GM12878 (cell line): ENCODE measurements at regions of chr2 and their contacts with region 1.

Region 1: DNA sequence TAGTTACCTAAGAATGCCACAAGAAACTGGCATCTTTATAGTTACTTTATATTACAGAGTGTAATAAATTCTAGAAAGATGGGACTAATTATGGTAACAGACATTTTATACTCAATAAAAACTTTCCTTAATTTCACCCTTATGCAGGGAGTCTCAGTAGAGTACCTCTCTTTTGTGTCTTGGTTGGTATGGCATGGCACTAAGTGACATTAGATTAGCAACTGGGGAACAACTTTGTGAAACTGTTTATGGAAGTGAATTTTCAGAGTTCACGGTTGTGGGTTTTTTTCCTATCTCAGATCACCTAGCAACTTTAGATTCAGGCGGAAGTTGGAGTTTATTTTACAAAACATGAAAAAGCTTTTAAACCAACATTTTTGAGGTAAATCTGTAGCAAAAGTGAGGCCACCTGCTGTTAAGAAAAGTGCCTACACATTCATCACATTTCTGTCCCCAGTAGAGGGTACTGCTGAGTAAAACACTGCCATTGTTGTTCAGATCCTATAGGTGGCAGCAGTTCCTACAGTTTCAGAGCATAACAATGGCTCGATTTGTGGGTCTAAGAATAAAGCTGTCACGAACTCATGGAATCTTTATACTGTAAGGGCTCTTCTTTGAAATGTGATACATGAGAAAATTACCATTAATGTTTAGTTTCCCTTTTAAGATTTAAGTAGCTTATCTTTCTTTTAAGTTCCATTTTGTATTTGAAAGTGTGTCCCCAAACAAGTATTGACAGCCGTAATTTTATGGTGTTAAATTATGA is 117.6 kb downstream of the CAMKMT start:
- DNase-seq: peak; percentile 61
- ATAC-seq: peak; percentile 100
- H3K4me3 ChIP-seq: no peak overlapping the region
- H3K27ac ChIP-seq: no peak overlapping the region
- H3K4me1 ChIP-seq: no peaks in the 10 kb centered on the region
- H3K27me3 ChIP-seq: no peaks in the 10 kb centered on the region
- CTCF ChIP-seq: peak; percentile 98 to 100 (median 100); a peak in 5 of 6 replicates
- EP300 ChIP-seq: no peak
- POLR2A ChIP-seq: no peak
- RAD21 ChIP-seq: peak; percentile 99

Region 2: DNA sequence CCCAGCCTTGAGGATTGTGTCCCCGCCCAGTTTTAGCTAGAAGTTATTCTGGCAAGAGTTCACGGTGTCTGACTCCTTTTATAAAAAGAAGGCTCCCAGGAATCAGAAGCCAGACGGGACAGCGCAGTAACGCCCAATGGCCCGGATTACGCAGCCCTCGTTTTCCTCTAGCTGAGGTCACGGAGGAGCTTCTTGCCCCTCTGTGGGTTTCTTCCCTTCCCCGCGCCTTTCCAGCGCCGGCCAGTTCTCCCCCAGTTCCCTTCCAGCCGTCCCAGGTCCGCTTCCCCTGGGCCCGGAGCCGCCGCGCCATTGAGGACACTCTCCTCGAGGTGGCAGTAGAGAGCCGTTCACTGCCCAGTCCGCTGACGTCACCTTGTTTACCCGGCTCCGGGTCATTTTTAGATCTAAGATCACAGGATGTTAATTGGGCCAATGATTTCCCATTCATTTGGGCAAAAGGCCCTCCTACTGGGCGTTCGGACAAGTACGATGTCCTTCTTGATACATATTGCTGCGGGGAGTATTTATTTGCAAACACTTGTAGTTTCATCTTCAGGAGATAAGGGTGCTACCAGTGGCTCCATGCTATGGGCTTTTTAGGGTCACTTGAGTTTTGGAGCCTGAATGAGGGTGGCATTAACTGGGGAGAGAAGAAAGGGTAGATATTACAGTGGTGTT is 392.1 kb before region 1 on chr2:
- CTCF ChIA-PET with region 1: interaction called, 10 read pairs
- POLR2A ChIA-PET with region 1: interaction called, 3 read pairs
- RAD21 ChIA-PET with region 1: interaction called, 5 read pairs
- SMC1A ChIA-PET with region 1: interaction called, 6 read pairs
- in situ Hi-C with region 1: no loop called
- intact Hi-C with region 1: loop called (anchors 1 kb)
- DNase-seq: no peak
- ATAC-seq: peak; percentile 79
- H3K4me3 ChIP-seq: peak overlapping the region; percentile 61; the same call in 1 of the 2 replicates
- H3K27ac ChIP-seq: no peak overlapping the region
- H3K4me1 ChIP-seq: peaks cover 13% of the 10 kb centered on the region
- H3K27me3 ChIP-seq: no peaks in the 10 kb centered on the region
- CTCF ChIP-seq: peak; percentile 93 to 97 (median 96); a peak in 5 of 6 replicates
- EP300 ChIP-seq: no peak
- POLR2A ChIP-seq: no peak
- RAD21 ChIP-seq: peak; percentile 95

Region 3: DNA sequence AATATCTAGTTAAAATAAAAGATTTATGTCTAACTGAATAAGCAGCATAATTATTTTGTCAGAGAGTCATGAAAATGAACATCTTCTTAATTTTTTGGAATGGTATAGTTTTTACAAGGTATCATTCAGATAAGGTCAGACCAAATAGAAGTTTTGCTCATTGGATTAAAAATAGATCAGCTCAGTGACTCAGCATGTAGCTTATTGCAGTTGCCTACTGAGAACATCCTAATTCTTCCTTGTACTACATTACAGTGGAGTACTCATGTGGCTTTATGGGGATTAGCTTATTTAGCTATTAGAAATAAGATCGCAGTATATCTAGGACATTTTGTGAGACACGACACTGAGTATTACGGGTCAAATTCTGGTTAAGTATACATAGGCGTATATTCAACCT is 348.9 kb before region 1 on chr2:
- CTCF ChIA-PET with region 1: no interaction called
- POLR2A ChIA-PET with region 1: no interaction called
- RAD21 ChIA-PET with region 1: no interaction called
- SMC1A ChIA-PET with region 1: no interaction called
- in situ Hi-C with region 1: no loop called
- intact Hi-C with region 1: no loop called
- DNase-seq: no peak
- ATAC-seq: no peak
- H3K4me3 ChIP-seq: no peak overlapping the region
- H3K27ac ChIP-seq: no peak overlapping the region
- H3K4me1 ChIP-seq: no peaks in the 10 kb centered on the region
- H3K27me3 ChIP-seq: no peaks in the 10 kb centered on the region
- CTCF ChIP-seq: no peak
- EP300 ChIP-seq: no peak
- POLR2A ChIP-seq: no peak
- RAD21 ChIP-seq: no peak

Region 4: DNA sequence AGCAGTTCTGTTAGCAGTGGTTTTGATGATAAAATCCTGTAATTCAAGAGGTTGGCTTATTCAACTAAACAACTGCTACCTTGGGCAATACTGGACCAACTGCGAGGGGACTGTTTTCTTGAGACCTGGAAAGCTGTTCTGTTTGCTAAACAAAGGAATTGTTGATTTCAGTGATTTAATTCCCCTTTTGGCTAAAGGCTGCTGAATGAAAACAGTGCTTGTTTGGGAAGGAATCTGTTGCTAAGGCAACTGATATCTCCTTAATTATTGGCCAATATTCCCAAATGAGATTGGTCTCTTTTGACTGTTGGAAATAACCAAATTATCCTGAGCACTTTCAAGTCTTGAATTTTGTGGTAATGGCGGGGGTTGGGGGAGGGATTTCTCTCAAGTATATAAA is 19.2 kb after region 1 on chr2:
- CTCF ChIA-PET with region 1: interaction called, 24 read pairs
- POLR2A ChIA-PET with region 1: no interaction called
- RAD21 ChIA-PET with region 1: no interaction called
- SMC1A ChIA-PET with region 1: interaction called, 19 read pairs
- in situ Hi-C with region 1: no loop called
- intact Hi-C with region 1: no loop called
- DNase-seq: no peak
- ATAC-seq: no peak
- H3K4me3 ChIP-seq: no peak overlapping the region
- H3K27ac ChIP-seq: no peak overlapping the region
- H3K4me1 ChIP-seq: no peaks in the 10 kb centered on the region
- H3K27me3 ChIP-seq: no peaks in the 10 kb centered on the region
- CTCF ChIP-seq: no peak
- EP300 ChIP-seq: no peak
- POLR2A ChIP-seq: no peak
- RAD21 ChIP-seq: no peak

Region 5: DNA sequence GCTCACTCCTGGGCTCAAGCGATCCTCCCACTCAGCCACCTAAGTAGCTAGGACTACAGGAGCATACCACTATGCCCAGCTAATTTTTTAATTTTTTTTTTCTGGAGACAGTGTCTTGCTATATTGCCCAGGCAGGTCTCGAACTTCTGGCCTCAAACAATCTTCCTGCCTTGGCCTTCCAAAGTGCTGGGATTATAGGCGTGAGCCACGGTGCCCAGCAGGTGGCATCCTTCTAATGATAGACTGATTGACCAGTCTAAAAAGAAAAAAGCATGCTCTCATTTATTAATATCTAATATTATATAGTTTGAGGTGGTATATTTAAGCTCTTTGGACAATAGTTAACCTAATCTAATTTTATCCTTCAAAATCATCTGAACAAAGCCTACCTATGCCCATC is 81.0 kb after region 1 on chr2:
- CTCF ChIA-PET with region 1: interaction called, 53 read pairs
- POLR2A ChIA-PET with region 1: no interaction called
- RAD21 ChIA-PET with region 1: interaction called, 30 read pairs
- SMC1A ChIA-PET with region 1: interaction called, 21 read pairs
- in situ Hi-C with region 1: no loop called
- intact Hi-C with region 1: no loop called
- DNase-seq: no peak
- ATAC-seq: peak; percentile 57
- H3K4me3 ChIP-seq: no peak overlapping the region
- H3K27ac ChIP-seq: no peak overlapping the region
- H3K4me1 ChIP-seq: no peaks in the 10 kb centered on the region
- H3K27me3 ChIP-seq: no peaks in the 10 kb centered on the region
- CTCF ChIP-seq: peak; percentile 29 to 40 (median 36); a peak in 5 of 6 replicates
- EP300 ChIP-seq: no peak
- POLR2A ChIP-seq: no peak
- RAD21 ChIP-seq: peak; percentile 48

Region 6: GRCh38 chr2:44707945-44708660 is 228.8 kb after region 1 on chr2:
- CTCF ChIA-PET with region 1: interaction called, 46 read pairs
- POLR2A ChIA-PET with region 1: no interaction called
- RAD21 ChIA-PET with region 1: interaction called, 24 read pairs
- SMC1A ChIA-PET with region 1: interaction called, 23 read pairs
- in situ Hi-C with region 1: no loop called
- intact Hi-C with region 1: no loop called
- DNase-seq: peak; percentile 25
- ATAC-seq: peak; percentile 86
- H3K4me3 ChIP-seq: no peak overlapping the region; the same call in 1 of the 2 replicates
- H3K27ac ChIP-seq: peak overlapping the region; percentile 23; the same call in 1 of the 2 replicates
- H3K4me1 ChIP-seq: peaks cover 8% of the 10 kb centered on the region
- H3K27me3 ChIP-seq: no peaks in the 10 kb centered on the region
- CTCF ChIP-seq: no peak
- EP300 ChIP-seq: no peak
- POLR2A ChIP-seq: no peak
- RAD21 ChIP-seq: no peak

Region 7: GRCh38 chr2:44922776-44923175 is 443.5 kb after region 1 on chr2:
- CTCF ChIA-PET with region 1: interaction called, 13 read pairs
- POLR2A ChIA-PET with region 1: no interaction called
- RAD21 ChIA-PET with region 1: interaction called, 6 read pairs
- SMC1A ChIA-PET with region 1: no interaction called
- in situ Hi-C with region 1: no loop called
- intact Hi-C with region 1: no loop called
- DNase-seq: no peak
- ATAC-seq: no peak
- H3K4me3 ChIP-seq: no peak overlapping the region
- H3K27ac ChIP-seq: no peak overlapping the region
- H3K4me1 ChIP-seq: no peaks in the 10 kb centered on the region
- H3K27me3 ChIP-seq: peaks cover 0 to 14% of the 10 kb centered on the region in 2 experiments; a peak in 3 of 4 replicates
- CTCF ChIP-seq: no peak
- EP300 ChIP-seq: no peak
- POLR2A ChIP-seq: no peak
- RAD21 ChIP-seq: no peak